A673 (cell line): ENCODE measurements at regions of chr9 and their contacts with region 1.

Region 1: DNA sequence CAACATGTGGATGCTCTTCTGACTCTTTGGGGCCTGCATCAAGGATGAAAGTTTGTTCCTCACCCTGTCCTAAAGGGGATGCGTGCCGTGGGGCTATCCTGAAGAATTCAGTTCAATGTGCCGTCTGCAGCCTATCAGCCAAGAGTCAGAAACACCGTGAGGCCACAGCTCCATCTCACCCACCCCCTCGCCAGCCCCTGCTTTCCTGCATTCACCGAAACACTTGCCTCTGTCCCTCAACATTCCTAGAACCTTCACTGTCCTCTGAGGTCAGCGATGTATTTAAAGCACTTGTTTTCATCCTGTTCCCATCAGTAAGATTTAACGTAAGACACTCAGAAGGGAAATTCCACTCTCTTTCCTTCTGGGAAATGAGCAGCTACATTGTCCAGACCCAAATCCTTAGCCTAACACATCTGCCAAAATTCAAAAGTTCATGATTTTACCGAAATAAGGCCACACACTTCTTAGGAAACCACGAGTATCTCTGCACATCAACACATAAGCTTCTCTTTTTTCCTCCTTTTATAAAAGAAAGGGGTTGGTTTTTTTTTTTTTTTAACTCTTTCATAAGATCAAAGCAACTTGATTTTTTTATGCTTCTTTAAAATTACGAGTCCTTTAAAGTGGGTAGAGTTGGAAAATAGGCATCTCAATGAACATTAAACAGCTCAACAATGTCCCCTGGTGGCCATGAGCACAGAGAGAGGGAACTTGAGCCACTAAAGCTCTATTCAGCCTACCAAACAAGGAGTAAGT is 100.7 kb downstream of the SUSD1 start:
- DNase-seq: peak; percentile 78
- H3K4me3 ChIP-seq: no peak overlapping the region
- H3K27ac ChIP-seq: no peak overlapping the region
- H3K4me1 ChIP-seq: no peaks in the 10 kb centered on the region
- H3K27me3 ChIP-seq: no peaks in the 10 kb centered on the region
- CTCF ChIP-seq: peak; percentile 96

Region 2: GRCh38 chr9:111828193-111828592 is 246.2 kb before region 1 on chr9:
- CTCF ChIA-PET with region 1: interaction called, 4 read pairs
- POLR2A ChIA-PET with region 1: no interaction called
- intact Hi-C with region 1: loop called (anchors 2 kb)
- DNase-seq: peak; percentile 55
- H3K4me3 ChIP-seq: no peak overlapping the region
- H3K27ac ChIP-seq: no peak overlapping the region
- H3K4me1 ChIP-seq: peaks cover 9% of the 10 kb centered on the region
- H3K27me3 ChIP-seq: peaks cover 4% of the 10 kb centered on the region
- CTCF ChIP-seq: peak; percentile 46

Region 3: DNA sequence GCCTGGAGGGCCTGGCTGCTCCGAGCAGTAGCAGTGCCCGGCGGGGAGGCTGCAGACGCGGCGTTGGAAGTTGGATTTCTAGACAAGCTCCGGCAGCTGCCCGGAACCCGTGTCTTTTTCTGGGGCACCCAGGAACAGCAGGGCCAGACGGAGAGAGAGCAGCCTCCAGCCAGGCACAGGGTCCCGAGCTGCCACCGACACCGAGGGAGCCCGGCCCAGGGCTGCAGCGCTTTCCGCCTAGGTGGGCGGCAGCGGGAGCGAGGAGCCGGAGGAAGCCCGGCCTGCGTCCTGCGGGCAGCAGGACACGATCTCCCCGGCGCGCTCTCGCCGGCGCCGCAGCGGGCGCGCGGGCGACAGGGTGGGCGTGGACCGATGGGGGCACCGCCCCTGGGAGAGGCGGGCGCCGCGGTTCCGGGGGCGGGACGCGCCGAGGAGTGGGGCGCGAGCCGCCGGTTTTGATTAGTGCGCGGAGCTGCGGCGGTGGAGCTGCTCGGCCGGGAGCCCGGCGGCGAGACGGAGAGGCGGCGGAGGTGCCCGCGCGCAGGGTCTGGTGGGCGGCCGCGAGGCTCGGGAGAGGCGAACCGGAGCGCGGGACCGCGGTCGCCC is 178.0 kb before region 1 on chr9 and contains the start of gene UGCG:
- CTCF ChIA-PET with region 1: interaction called, 12 read pairs
- POLR2A ChIA-PET with region 1: no interaction called
- intact Hi-C with region 1: loop called (anchors 2 kb)
- DNase-seq: peak; percentile 92
- H3K4me3 ChIP-seq: peak within 1 kb of the TSS; percentile 96
- H3K27ac ChIP-seq: peak within 1 kb of the TSS; percentile 84
- H3K4me1 ChIP-seq: peaks cover 20% of the 10 kb centered on the region
- H3K27me3 ChIP-seq: no peaks in the 10 kb centered on the region
- CTCF ChIP-seq: no peak
- total RNA-seq, gene UGCG: 16.7 and 23.1 TPM in 2 replicates